K562 (cell line): ENCODE measurements at regions of chr4 and their contacts with region 1.

Region 1: DNA sequence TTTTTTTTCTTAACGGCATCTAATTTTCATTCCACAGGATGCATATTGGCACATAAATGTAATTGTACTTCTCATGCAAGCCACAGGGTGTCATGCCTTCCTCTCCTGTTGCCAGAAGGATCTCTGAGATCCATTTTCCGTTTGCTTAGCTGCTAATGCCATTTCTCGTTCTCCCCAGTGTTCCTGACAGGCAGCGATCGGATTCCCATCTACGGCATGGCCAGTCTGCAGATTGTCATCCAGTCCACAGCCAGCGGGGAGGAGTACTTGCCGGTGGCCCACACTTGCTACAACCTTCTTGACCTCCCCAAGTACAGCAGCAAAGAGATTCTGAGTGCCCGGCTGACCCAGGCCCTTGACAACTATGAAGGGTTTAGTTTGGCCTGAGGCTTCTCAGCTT is 8.9 kb upstream of the NAP1L5 start:
- DNase-seq: peak in 1 of 4 experiments; percentile 30
- ATAC-seq: peak; percentile 75; the same call in 2 of the 3 replicates
- H3K4me3 ChIP-seq: no peak overlapping the region
- H3K27ac ChIP-seq: no peak overlapping the region
- H3K4me1 ChIP-seq: no peaks in the 10 kb centered on the region; a peak in 1 of 5 replicates
- H3K27me3 ChIP-seq: no peaks in the 10 kb centered on the region
- CTCF ChIP-seq: peak; percentile 43 to 53 (median 48); a peak in 4 of 6 replicates
- EP300 ChIP-seq: no peak
- POLR2A ChIP-seq: no peak
- RAD21 ChIP-seq: peak in 1 of 2 experiments; percentile 45; a peak in 2 of 4 replicates

Region 2: DNA sequence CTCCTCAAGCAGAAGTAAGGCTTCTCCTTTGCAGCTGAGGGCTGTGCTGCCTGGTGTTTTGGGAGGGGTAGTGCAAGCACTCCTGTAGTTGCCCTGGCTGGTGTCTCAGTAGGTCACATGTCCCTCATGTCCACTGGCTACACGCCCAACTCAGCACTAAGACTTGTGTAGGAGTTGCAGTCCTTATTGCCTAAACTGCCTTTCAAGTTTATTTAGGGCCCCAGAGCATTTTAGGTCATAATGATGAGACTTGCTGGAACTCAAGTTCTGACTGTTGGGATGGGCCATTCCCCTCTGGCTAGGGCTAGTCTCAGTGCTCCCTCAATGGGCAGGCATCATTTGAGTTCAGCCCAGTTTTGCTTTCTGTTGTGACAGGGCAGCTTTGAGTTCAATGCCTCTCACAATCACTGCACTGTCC is 466.3 kb before region 1 on chr4:
- CTCF ChIA-PET with region 1: no interaction called
- POLR2A ChIA-PET with region 1: no interaction called
- in situ Hi-C with region 1: no loop called
- intact Hi-C with region 1: no loop called
- DNase-seq: no peak
- ATAC-seq: no peak
- H3K4me3 ChIP-seq: no peak overlapping the region
- H3K27ac ChIP-seq: no peak overlapping the region
- H3K4me1 ChIP-seq: peaks cover 0 to 11% of the 10 kb centered on the region in 2 experiments; a peak in 2 of 5 replicates
- H3K27me3 ChIP-seq: 0 out of 5 replicates have a peak, but pooled peaks cover 0 to 2% of the 10 kb centered on the region in 2 experiments
- CTCF ChIP-seq: no peak
- EP300 ChIP-seq: no peak
- POLR2A ChIP-seq: no peak
- RAD21 ChIP-seq: no peak

Region 3: DNA sequence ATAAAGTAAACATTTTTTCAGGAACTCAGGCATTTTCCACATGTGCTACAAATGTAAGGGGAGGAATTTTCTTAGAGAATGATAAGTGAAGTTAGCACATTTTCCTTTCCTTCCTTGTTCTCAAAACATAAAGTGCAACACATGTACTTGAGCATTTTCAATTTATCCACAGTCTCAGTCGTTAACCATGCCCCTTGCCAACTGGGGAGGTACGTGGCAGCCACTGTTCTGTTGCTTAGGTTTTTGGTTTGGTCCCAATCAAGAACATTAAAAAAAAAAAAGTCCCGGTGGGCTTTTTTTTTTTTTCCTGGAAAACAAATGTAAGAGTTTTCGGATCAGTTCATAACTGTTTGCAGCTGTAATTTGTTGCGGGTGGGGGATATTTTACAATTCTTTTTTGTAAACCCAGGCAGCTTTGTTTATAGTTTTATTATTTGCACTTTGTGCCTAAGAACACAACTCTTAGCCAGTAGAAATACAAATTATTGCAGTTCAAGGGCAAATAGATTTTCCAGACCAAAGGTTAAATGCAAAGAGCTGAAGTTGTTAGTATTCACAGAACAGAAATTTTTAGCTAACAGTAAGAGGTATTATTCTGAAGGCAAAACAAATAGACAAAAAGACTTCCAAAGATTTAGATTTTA is 103.1 kb after region 1 on chr4:
- CTCF ChIA-PET with region 1: no interaction called
- POLR2A ChIA-PET with region 1: no interaction called
- in situ Hi-C with region 1: no loop called
- intact Hi-C with region 1: loop called (anchors 5 kb)
- DNase-seq: no peak
- ATAC-seq: no peak
- H3K4me3 ChIP-seq: no peak overlapping the region
- H3K27ac ChIP-seq: no peak overlapping the region
- H3K4me1 ChIP-seq: peaks cover 3 to 6% of the 10 kb centered on the region in 2 experiments; a peak in 1 of 5 replicates
- H3K27me3 ChIP-seq: no peaks in the 10 kb centered on the region
- CTCF ChIP-seq: no peak
- EP300 ChIP-seq: no peak
- POLR2A ChIP-seq: no peak
- RAD21 ChIP-seq: no peak